Activated CD8-positive, alpha-beta T cell treated with anti-CD3 and anti-CD28 coated beads for 36 hours (primary cell): ENCODE measurements at regions of chr17 and their contacts with region 1.

Region 1: GRCh38 chr17:1882836-1883235 is 53.0 kb downstream of the RPA1 start:
- DNase-seq: peak; percentile 52
- ATAC-seq: peak; percentile 53
- H3K4me3 Mint-ChIP-seq: no peak overlapping the region
- H3K27ac Mint-ChIP-seq: no peak overlapping the region
- H3K4me1 Mint-ChIP-seq: no peaks in the 10 kb centered on the region
- H3K27me3 Mint-ChIP-seq: no peaks in the 10 kb centered on the region
- CTCF ChIP-seq: peak; percentile 53

Region 2: DNA sequence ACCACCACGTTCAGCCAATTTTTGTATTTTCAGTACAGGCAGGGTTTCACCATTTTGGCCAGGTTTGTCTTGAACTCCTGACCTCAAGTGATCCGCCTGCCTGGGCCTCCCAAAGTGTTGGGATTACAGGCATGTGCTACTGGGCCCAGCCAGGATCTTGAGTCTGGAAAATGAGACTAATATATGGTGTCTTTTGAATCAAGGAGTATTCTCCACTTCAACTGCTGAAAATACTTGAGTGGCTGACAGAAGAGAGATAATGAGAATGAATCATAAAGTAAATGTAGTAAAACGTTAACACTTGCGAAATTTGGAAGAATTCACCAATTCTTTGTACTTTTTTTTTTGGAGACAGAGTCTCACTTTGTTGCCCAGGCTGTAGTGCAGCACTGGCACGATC is 69.7 kb before region 1 on chr17:
- CTCF ChIA-PET with region 1: no interaction called
- POLR2A ChIA-PET with region 1: no interaction called
- intact Hi-C with region 1: no loop called
- DNase-seq: no peak
- ATAC-seq: no peak
- H3K4me3 Mint-ChIP-seq: no peak overlapping the region
- H3K27ac Mint-ChIP-seq: no peak overlapping the region
- H3K4me1 Mint-ChIP-seq: peaks cover 1% of the 10 kb centered on the region
- H3K27me3 Mint-ChIP-seq: no peaks in the 10 kb centered on the region
- CTCF ChIP-seq: no peak

Region 3: GRCh38 chr17:1847191-1847590 is 35.6 kb before region 1 on chr17:
- CTCF ChIA-PET with region 1: no interaction called
- POLR2A ChIA-PET with region 1: no interaction called
- intact Hi-C with region 1: no loop called
- DNase-seq: no peak
- ATAC-seq: no peak
- H3K4me3 Mint-ChIP-seq: no peak overlapping the region
- H3K27ac Mint-ChIP-seq: no peak overlapping the region
- H3K4me1 Mint-ChIP-seq: no peaks in the 10 kb centered on the region
- H3K27me3 Mint-ChIP-seq: no peaks in the 10 kb centered on the region
- CTCF ChIP-seq: no peak

Region 4: GRCh38 chr17:1870592-1870991 is 12.2 kb before region 1 on chr17:
- CTCF ChIA-PET with region 1: interaction called, 50 read pairs
- POLR2A ChIA-PET with region 1: interaction called, 3 read pairs
- intact Hi-C with region 1: no loop called
- DNase-seq: no peak
- ATAC-seq: peak; percentile 77
- H3K4me3 Mint-ChIP-seq: peak overlapping the region; percentile 29
- H3K27ac Mint-ChIP-seq: peak overlapping the region; percentile 92
- H3K4me1 Mint-ChIP-seq: peaks cover 50% of the 10 kb centered on the region
- H3K27me3 Mint-ChIP-seq: no peaks in the 10 kb centered on the region
- CTCF ChIP-seq: no peak